ENCODE measurements at regions of chr15 and their contacts with region 1.

Region 1: GRCh38 chr15:100111103-100112060 is 230.4 kb downstream of the ADAMTS17 start:
- DNase-seq: peak; percentile 79 to 95
- H3K4me3 ChIP-seq: peak overlapping the region in 1 of 2 donors; percentile 6
- H3K27ac ChIP-seq: peak overlapping the region; percentile 90 to 96
- H3K4me1 ChIP-seq: peaks cover 39 to 58% of the 10 kb centered on the region in 2 donors
- H3K27me3 ChIP-seq: no peaks in the 10 kb centered on the region
- CTCF ChIP-seq: peak in 1 of 3 experiments; percentile 15

Region 2: GRCh38 chr15:100043015-100043641 is 68.3 kb before region 1 on chr15:
- intact Hi-C with region 1: loop called (anchors 5 kb)
- DNase-seq: no peak
- H3K4me3 ChIP-seq: peak overlapping the region; percentile 1 to 32
- H3K27ac ChIP-seq: peak overlapping the region; percentile 48 to 58
- H3K4me1 ChIP-seq: peaks cover 0 to 10% of the 10 kb centered on the region in 2 donors
- H3K27me3 ChIP-seq: no peaks in the 10 kb centered on the region
- CTCF ChIP-seq: no peak

Region 3: DNA sequence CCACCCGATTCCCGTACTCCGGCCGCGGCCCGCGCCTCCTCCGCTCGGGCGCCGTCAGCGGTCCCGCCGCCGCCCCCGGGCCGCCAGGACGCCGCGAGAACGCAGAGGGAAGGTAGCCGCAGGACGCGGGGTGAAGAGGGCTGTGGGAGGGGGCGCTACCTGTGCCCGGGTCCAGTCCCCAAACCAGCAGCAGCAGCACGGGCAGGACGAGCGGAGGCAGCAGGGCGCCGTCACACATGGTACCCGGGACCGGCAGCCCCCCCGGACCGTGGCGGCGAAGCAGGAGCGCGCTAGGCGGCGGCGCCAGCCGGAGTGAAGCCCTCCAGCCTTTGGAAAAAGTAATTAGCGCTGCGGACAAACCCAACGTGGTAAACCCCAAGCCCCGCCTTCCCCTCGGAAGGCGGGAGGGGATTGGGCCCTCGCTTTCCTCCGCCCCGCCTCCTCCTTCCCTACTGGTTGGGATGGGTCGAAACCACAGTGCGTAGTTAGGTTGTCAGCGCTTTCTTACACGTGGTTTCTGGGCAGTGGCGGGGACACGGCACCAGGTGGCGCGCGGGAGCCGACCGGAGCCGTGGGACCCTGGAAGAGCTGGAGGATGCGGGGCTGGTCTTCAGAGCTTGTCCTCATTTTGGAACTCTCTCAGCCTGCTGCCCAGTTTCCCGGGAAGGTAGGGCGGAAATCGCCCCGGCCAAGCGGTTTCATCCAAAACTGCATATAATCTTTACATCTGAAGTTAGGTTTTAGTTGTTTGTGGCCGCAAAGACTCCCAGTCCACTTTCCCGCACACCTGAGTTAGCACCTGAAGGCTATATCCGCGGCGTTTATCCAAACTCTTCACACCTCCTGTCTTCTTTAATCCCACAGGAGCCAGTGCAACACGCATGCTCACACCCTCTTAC is 230.5 kb after region 1 on chr15 and contains the start of gene ADAMTS17:
- intact Hi-C with region 1: loop called (anchors 2 kb)
- DNase-seq: peak; percentile 89 to 98
- H3K4me3 ChIP-seq: peak within 1 kb of the TSS; percentile 81 to 96
- H3K27ac ChIP-seq: peak within 1 kb of the TSS; percentile 69 to 78
- H3K4me1 ChIP-seq: peaks cover 0 to 2% of the 10 kb centered on the region in 2 donors
- H3K27me3 ChIP-seq: no peaks in the 10 kb centered on the region
- CTCF ChIP-seq: peak; percentile 91 to 95 (median 94)
- total RNA-seq, gene ADAMTS17: 2.8 TPM

Measured in ascending aorta (tissue), 2 donors.